Lower leg skin (tissue), 4 donors: ENCODE measurements at regions of chr11 and their contacts with region 1.

Region 1: DNA sequence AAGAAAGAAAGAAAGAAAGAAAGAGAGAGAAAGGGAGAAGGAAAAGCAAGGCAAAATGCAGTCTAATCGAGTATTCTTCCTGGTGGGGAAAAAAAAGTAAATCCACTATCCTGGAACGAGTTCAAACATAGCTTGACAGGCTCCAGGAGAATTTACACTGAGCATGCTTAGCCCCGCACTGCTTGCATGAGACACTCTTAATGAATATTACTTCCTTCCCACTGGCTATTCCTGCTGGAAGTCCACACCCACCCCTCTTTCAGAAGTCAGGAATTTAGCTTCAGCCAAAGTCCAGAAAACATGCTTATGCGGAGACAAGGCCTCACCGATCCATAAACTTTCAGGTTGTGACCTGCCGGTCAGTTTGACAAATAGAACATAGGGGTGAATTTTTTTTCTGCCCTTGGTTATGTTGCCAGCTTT is 251.8 kb upstream of the BLID start:
- DNase-seq: peak in 1 of 2 donors; percentile 32
- H3K4me3 ChIP-seq: no peak overlapping the region
- CTCF ChIP-seq: no peak
- POLR2A ChIP-seq: no peak

Region 2: DNA sequence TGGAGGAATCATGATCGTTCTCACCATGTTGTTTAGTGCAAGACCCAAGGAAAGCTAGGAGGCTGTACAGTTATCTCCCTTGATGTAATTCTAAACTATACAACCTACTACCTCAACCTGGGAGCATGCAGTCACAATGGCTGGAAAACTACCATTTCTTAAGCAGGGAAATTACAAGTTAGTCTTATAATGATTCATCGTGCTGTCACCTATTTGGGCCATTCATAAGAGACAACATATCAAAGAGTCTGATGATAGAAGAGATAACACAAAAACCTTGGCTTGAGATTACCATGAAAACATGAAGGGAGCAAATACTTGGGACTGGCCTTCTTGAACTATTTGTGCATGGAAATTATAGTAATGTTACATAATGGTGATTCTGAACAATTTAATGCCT is 221.3 kb before region 1 on chr11:
- intact Hi-C with region 1: no loop called
- DNase-seq: no peak
- H3K4me3 ChIP-seq: no peak overlapping the region
- CTCF ChIP-seq: no peak
- POLR2A ChIP-seq: no peak

Region 3: DNA sequence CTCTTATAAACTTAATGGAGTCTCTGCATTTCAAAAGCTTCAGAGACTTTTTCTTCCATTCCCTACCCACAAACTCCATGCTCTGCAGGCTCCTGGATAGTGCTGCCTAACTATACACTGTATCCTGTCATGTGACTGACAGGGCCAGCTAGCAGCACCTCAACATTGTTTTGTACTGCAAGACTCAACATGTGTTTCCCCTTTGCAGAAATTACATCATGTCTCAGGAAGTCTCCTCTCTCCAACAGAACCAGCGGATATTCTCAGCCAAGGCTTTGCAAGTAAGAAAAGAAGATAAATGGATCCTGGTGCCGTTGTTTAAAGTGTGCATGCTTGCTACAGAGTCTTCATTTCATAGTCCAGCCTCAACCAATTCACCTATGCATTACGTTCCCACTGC is 123.7 kb after region 1 on chr11:
- intact Hi-C with region 1: no loop called
- DNase-seq: no peak
- H3K4me3 ChIP-seq: no peak overlapping the region
- CTCF ChIP-seq: no peak
- POLR2A ChIP-seq: no peak

Region 4: GRCh38 chr11:123543797-123544196 is 1176.0 kb after region 1 on chr11:
- intact Hi-C with region 1: loop called (anchors 5 kb)
- DNase-seq: no peak
- H3K4me3 ChIP-seq: no peak overlapping the region
- CTCF ChIP-seq: no peak
- POLR2A ChIP-seq: no peak